ENCODE measurements at regions of chr4 and their contacts with region 1.

Region 1: DNA sequence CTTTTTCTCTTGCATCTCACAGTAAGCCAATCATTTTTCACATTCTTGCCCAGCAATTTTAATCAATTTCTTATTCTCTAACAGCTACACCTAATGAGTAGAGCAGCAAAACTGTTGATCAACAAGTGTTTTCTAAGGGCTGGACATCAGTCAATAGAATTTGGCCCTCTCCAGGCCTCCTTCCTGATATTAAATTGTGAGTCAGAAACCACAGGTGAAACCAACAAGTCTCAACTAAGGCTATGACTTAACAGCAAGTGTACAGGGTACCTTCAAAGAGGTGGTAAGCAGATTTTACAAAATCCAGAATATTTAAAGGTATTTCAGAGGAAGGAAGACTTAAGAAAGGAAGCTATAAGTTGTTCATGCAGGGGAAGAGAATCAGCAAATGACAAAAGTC is 156.5 kb upstream of the ARHGAP24 start:
- DNase-seq: no peak
- H3K4me3 ChIP-seq: no peak overlapping the region
- H3K27ac ChIP-seq: no peak overlapping the region
- H3K4me1 ChIP-seq: no peaks in the 10 kb centered on the region
- H3K27me3 ChIP-seq: no peaks in the 10 kb centered on the region
- CTCF ChIP-seq: no peak
- POLR2A ChIP-seq: no peak

Region 2: GRCh38 chr4:85642356-85643100 is 324.1 kb after region 1 on chr4:
- intact Hi-C with region 1: loop called (anchors 5 kb)
- DNase-seq: no peak
- H3K4me3 ChIP-seq: no peak overlapping the region
- H3K27ac ChIP-seq: no peak overlapping the region
- H3K4me1 ChIP-seq: no peaks in the 10 kb centered on the region
- H3K27me3 ChIP-seq: no peaks in the 10 kb centered on the region
- CTCF ChIP-seq: no peak
- POLR2A ChIP-seq: no peak

Measured in vagina (tissue), 2 donors.